Common myeloid progenitor, CD34-positive (primary cell): ENCODE measurements at regions of chr3 and their contacts with region 1.

Region 1: DNA sequence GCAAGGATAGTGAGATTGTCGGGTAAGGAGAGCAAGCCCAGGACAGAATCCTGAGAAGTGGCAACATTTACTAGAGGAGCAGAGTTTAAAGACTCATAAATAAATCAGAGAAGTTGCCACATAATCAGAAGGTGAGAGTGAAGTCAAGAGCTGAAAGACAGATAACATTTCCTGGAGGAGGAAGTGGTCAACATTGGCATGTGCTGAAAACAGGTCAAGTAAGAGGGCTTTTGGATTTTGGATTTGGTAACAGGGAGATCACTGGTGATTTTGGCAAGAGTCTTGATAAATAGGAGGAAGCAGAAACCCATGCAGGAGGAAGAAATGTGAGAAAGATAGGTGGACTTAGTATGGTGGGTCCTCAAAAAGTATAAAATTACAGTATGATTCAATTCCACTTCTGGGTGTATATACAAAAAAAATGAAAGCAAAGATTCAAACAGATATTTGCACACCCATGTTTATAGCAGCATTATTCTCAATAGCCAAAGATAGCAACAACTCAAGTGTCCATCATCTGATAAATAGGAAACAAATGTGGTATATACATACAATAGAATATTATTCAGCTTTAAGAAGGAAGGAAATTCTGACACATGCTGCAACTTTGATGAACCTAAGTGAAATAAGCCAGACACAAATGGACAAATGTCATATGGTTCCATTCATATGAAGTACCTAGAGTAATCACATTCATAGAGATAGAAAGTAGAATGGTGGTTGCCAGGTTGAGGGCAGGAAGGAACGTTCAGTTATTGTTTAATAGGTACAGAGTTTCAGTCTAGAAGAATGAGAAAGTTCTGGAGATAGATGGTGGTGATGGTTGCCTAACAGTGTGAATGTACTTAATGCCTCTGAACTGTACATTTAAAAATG is 27.3 kb upstream of the MBNL1 start:
- DNase-seq: peak in 2 of 3 donors; percentile 51 to 64
- H3K4me3 ChIP-seq: peak overlapping the region in 2 of 7 experiments; percentile 5 to 25
- H3K27ac ChIP-seq: peak overlapping the region in 1 of 2 experiments; percentile 94
- H3K4me1 ChIP-seq: peaks cover 18 to 50% (median 47%) of the 10 kb centered on the region in 4 experiments
- H3K27me3 ChIP-seq: no peaks in the 10 kb centered on the region

Region 2: GRCh38 chr3:151697496-151697895 is 543.9 kb before region 1 on chr3:
- CTCF ChIA-PET with region 1: no interaction called
- POLR2A ChIA-PET with region 1: no interaction called
- DNase-seq: no peak
- H3K4me3 ChIP-seq: no peak overlapping the region
- H3K27ac ChIP-seq: no peak overlapping the region
- H3K4me1 ChIP-seq: no peaks in the 10 kb centered on the region
- H3K27me3 ChIP-seq: no peaks in the 10 kb centered on the region

Region 3: GRCh38 chr3:152258448-152259393 is 17.3 kb after region 1 on chr3:
- CTCF ChIA-PET with region 1: interaction called, 21 read pairs
- POLR2A ChIA-PET with region 1: interaction called, 3 read pairs
- DNase-seq: peak; percentile 50 to 85 (median 83)
- H3K4me3 ChIP-seq: peak overlapping the region in 2 of 7 experiments; percentile 2 to 18
- H3K27ac ChIP-seq: peak overlapping the region; percentile 43 to 82
- H3K4me1 ChIP-seq: peaks cover 51 to 76% (median 62%) of the 10 kb centered on the region in 4 experiments
- H3K27me3 ChIP-seq: no peaks in the 10 kb centered on the region